H1 (cell line): ENCODE measurements at regions of chr1 and their contacts with region 1.

Region 1: GRCh38 chr1:207058878-207059867 is 6.1 kb downstream of the PFKFB2 start:
- DNase-seq: no peak
- H3K4me3 ChIP-seq: no peak overlapping the region
- H3K27ac ChIP-seq: no peak overlapping the region
- H3K4me1 ChIP-seq: peaks cover 0 to 3% (median 1%) of the 10 kb centered on the region in 4 experiments; a peak in 2 of 7 replicates
- H3K27me3 ChIP-seq: no peaks in the 10 kb centered on the region
- CTCF ChIP-seq: peak; percentile 35 to 55 (median 37); a peak in 3 of 4 replicates
- EP300 ChIP-seq: no peak
- POLR2A ChIP-seq: no peak
- RAD21 ChIP-seq: peak in 1 of 2 experiments; percentile 33; a peak in 1 of 4 replicates

Region 2: GRCh38 chr1:207015791-207016190 is 43.4 kb before region 1 on chr1:
- CTCF ChIA-PET with region 1: no interaction called
- POLR2A ChIA-PET with region 1: no interaction called
- DNase-seq: no peak
- H3K4me3 ChIP-seq: no peak overlapping the region
- H3K27ac ChIP-seq: no peak overlapping the region
- H3K4me1 ChIP-seq: no peaks in the 10 kb centered on the region
- H3K27me3 ChIP-seq: no peaks in the 10 kb centered on the region
- CTCF ChIP-seq: no peak
- EP300 ChIP-seq: no peak
- POLR2A ChIP-seq: no peak
- RAD21 ChIP-seq: no peak

Region 3: GRCh38 chr1:207069858-207070506 is 10.8 kb after region 1 on chr1:
- CTCF ChIA-PET with region 1: interaction called, 21 read pairs
- POLR2A ChIA-PET with region 1: interaction called, 3 read pairs
- DNase-seq: no peak
- H3K4me3 ChIP-seq: no peak overlapping the region
- H3K27ac ChIP-seq: no peak overlapping the region
- H3K4me1 ChIP-seq: no peaks in the 10 kb centered on the region
- H3K27me3 ChIP-seq: no peaks in the 10 kb centered on the region
- CTCF ChIP-seq: no peak
- EP300 ChIP-seq: no peak
- POLR2A ChIP-seq: no peak
- RAD21 ChIP-seq: no peak

Region 4: DNA sequence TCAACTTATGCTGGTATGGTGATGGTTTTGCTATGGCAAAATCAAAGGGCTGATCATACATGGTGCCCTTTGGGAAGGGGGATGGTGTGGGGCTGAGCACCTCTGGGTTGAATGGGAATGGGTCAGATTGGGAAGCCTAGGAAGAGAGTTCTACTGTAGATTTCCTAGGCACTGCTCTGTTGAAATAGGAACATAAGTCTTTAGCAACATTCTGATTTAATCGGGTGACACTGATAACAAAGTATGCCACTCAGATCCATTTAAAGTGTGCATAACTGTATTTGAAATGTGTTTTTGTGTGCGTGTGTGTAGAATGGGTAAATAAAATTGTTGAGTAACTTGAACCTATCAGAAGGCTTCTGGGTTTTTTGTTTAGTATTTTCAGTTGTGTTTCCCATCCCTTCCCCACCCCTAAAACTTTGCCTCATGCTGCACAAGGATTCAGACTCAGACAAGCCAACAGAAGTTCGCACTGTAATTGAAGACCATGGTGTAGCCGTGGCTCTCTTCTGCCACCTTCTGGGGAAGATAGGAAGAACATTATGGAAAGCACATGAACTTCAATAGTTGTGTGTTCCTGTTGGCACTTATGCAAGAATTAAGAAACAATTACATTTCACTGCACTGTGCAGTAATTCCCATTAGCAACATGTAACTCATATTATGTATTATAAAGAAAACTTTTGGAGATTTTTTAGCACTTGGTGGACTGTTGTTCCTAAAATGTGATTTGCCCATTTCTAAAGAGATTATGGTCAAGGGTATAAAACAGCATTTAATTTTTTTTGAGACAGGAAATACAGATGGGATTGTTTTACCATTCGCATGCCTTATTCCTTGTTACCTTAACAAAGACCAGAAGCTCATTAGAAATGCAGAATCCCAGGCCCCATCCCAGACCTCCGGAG is 18.6 kb after region 1 on chr1:
- CTCF ChIA-PET with region 1: interaction called, 21 read pairs
- POLR2A ChIA-PET with region 1: interaction called, 3 read pairs
- DNase-seq: peak in 1 of 2 experiments; percentile 69
- H3K4me3 ChIP-seq: no peak overlapping the region
- H3K27ac ChIP-seq: no peak overlapping the region
- H3K4me1 ChIP-seq: no peaks in the 10 kb centered on the region
- H3K27me3 ChIP-seq: no peaks in the 10 kb centered on the region
- CTCF ChIP-seq: peak; percentile 4 to 87 (median 77)
- EP300 ChIP-seq: no peak
- POLR2A ChIP-seq: no peak
- RAD21 ChIP-seq: peak; percentile 86 to 89